Transverse colon (tissue), 4 donors: ENCODE measurements at regions of chr11 and their contacts with region 1.

Region 1: GRCh38 chr11:8033305-8034105 is 46.4 kb downstream of the EIF3F start:
- DNase-seq: peak; percentile 72
- H3K4me3 ChIP-seq: no peak overlapping the region
- H3K27ac ChIP-seq: no peak overlapping the region
- H3K4me1 ChIP-seq: peaks cover 0 to 8% (median 4%) of the 10 kb centered on the region in 4 donors
- H3K27me3 ChIP-seq: no peaks in the 10 kb centered on the region
- CTCF ChIP-seq: peak; percentile 71 to 88 (median 81)
- EP300 ChIP-seq: no peak
- POLR2A ChIP-seq: no peak

Region 2: DNA sequence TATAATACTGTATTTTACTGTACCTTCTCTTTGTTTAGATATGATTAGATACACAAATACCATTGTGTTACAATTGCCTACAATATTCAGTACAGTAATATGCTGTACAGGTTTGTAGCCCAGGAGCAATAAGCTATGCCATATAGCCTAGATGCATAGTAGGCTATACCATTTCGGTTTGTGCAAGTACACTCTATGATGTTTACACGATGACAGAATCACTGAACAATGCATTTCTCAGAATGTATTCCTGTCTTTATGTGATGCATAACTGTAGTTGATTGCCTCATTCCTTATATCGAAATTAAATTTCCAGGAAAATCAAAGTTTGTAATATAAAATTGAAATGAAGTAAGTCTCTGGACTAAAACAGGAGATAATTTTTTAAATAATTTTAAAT is 187.5 kb before region 1 on chr11:
- in situ Hi-C with region 1: no loop called
- intact Hi-C with region 1: no loop called
- DNase-seq: no peak
- H3K4me3 ChIP-seq: no peak overlapping the region
- H3K27ac ChIP-seq: no peak overlapping the region
- H3K4me1 ChIP-seq: no peaks in the 10 kb centered on the region
- H3K27me3 ChIP-seq: no peaks in the 10 kb centered on the region
- CTCF ChIP-seq: no peak
- EP300 ChIP-seq: no peak
- POLR2A ChIP-seq: no peak

Region 3: GRCh38 chr11:8070417-8071115 is 37.1 kb after region 1 on chr11:
- in situ Hi-C with region 1: no loop called
- intact Hi-C with region 1: loop called (anchors 5 kb)
- DNase-seq: no peak
- H3K4me3 ChIP-seq: no peak overlapping the region
- H3K27ac ChIP-seq: no peak overlapping the region
- H3K4me1 ChIP-seq: peaks cover 0 to 16% (median 7%) of the 10 kb centered on the region in 4 donors
- H3K27me3 ChIP-seq: no peaks in the 10 kb centered on the region
- CTCF ChIP-seq: peak in 2 of 5 experiments; percentile 11 to 17
- EP300 ChIP-seq: no peak
- POLR2A ChIP-seq: no peak